Motor neuron (in vitro differentiated cells): ENCODE measurements at regions of chr18 and their contacts with region 1.

Region 1: DNA sequence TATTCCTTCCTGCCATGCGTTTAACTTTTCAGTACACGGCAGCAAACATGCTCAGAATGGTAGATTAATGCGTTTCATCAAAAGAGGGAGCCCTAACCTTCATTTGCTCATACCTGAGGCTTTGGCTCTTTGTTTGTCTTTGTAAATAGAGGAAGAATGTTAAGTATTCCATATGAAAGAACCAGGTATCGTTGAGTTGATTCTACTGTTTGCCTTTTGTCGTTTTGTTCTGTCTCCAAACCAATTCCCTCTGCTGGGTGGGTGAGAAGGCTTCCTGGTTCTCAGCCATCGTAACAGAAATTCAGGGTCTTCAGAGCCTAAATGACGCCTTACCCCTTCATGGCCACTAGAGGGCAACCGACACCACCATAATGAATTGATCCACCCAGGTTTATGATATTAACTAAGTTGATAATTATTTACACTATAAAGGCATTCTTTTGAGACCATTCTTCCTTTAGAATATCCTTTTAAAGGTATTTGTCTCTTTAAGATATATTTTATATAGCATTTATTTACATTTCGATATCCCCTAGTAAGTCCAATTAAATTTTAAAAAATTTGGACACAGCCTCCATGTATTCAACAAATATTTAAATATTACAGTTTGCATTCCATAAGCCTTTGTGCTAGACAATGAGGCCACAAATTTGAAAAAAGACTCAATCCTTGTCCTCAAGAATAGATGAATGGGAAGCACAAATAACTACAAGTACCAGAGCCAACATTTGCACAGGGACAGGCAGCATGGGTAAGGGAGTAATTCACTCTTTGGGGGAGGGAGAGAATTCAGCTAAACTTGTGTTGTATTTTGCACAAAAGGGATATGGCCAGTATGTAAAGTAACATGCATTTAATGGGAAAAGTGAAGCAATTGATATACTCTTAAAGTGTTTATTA is 48.1 kb downstream of the TIMM21 start:
- ATAC-seq: peak; percentile 54 to 92 (median 74)
- H3K4me3 ChIP-seq: peak overlapping the region in 2 of 5 donors; percentile 12
- H3K27ac ChIP-seq: no peak overlapping the region
- H3K4me1 ChIP-seq: no peaks in the 10 kb centered on the region

Region 2: DNA sequence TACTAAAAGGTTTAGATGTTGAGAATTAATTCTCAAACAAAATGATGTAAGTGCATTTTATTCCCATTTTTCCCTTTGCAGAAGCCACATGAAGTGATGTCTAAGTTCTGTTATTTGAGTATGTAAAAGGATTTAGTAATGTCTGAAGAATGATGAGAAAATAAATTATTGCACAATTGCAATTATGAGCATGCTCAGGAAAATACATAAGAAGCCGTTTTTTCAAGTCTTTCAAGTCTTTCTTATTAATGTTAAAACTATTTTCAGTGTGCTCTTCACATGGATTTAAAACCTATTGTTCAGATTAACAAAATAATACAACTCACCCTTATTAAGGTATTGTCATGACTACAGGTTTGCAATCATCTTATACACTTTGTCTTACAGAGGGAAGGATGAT is 997.3 kb before region 1 on chr18:
- in situ Hi-C with region 1: no loop called
- ATAC-seq: no peak
- H3K4me3 ChIP-seq: no peak overlapping the region
- H3K27ac ChIP-seq: no peak overlapping the region
- H3K4me1 ChIP-seq: peaks cover 0 to 5% of the 10 kb centered on the region in 2 donors

Region 3: DNA sequence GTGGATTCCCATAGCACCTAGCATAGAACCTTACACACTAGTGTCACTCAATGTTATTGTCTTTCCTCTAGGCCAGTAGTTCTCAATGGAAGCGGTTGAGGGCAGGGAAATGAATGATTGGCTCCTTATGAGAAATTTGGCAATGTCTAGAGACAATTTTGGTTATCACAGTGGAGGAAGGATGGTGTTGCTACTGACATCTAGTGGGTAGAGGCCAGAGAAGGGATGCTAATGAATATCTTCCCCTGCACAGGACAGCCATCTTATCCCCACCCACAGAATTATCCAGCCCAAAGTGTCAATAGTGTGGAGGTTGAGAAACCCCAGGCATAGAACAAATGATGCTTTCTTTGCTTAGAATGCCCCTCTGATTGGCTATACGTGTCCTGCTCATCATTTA is 134.9 kb after region 1 on chr18:
- in situ Hi-C with region 1: loop called in 4 of 9 experiments (anchors 10 to 25 kb)
- ATAC-seq: peak in 3 of 8 experiments; percentile 74 to 88 (median 80)
- H3K4me3 ChIP-seq: no peak overlapping the region
- H3K27ac ChIP-seq: no peak overlapping the region
- H3K4me1 ChIP-seq: no peaks in the 10 kb centered on the region

Region 4: GRCh38 chr18:74342416-74343043 is 146.1 kb after region 1 on chr18:
- in situ Hi-C with region 1: loop called in 4 of 9 experiments (anchors 10 to 25 kb)
- ATAC-seq: peak in 1 of 8 experiments; percentile 34
- H3K4me3 ChIP-seq: no peak overlapping the region
- H3K27ac ChIP-seq: no peak overlapping the region
- H3K4me1 ChIP-seq: no peaks in the 10 kb centered on the region

Region 5: GRCh38 chr18:74495581-74496507 is 299.4 kb after region 1 on chr18 and contains the start of gene CNDP2:
- in situ Hi-C with region 1: loop called in 2 of 9 experiments (anchors 25 kb)
- ATAC-seq: peak; percentile 73 to 88 (median 86)
- H3K4me3 ChIP-seq: peak within 1 kb of the TSS; percentile 64 to 81 (median 74)
- H3K27ac ChIP-seq: peak within 1 kb of the TSS; percentile 91 to 96
- H3K4me1 ChIP-seq: peaks cover 0 to 6% of the 10 kb centered on the region in 2 donors
- total RNA-seq, gene CNDP2: 42.5 to 222 (median 75.9) TPM

Region 6: DNA sequence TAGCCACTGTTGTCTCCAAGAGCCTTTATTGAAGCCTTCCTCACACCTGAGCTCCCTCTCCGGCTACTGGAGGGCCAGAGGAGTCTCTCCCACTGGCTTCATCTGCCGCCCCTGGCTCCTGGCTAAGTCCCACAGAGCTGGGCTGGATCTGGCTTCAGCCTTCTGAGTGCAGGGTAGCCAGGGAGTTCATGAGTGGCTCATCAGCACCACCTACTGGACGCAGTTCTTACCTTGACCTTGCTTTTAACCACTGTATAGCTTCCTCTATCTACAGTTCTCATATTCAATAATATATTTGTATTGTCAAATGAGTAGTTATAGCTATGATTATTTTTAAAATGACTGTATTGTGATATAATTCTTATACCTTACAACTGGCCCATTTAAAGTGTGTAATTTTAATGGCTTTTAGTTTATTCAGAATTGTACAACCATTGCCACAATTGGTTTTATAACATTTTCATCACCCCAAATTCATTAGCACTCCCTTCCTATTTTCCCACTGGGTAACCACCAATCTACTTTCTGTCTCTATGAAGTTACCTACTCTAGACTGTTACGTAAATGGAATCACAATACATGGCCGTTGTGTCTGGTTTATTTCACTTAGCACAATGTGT is 355.6 kb after region 1 on chr18:
- in situ Hi-C with region 1: loop called in 1 of 9 experiments (anchors 25 kb)
- ATAC-seq: peak; percentile 91 to 100 (median 96)
- H3K4me3 ChIP-seq: no peak overlapping the region
- H3K27ac ChIP-seq: no peak overlapping the region
- H3K4me1 ChIP-seq: no peaks in the 10 kb centered on the region